ENCODE measurements at regions of chr9 and their contacts with region 1.

Region 1: DNA sequence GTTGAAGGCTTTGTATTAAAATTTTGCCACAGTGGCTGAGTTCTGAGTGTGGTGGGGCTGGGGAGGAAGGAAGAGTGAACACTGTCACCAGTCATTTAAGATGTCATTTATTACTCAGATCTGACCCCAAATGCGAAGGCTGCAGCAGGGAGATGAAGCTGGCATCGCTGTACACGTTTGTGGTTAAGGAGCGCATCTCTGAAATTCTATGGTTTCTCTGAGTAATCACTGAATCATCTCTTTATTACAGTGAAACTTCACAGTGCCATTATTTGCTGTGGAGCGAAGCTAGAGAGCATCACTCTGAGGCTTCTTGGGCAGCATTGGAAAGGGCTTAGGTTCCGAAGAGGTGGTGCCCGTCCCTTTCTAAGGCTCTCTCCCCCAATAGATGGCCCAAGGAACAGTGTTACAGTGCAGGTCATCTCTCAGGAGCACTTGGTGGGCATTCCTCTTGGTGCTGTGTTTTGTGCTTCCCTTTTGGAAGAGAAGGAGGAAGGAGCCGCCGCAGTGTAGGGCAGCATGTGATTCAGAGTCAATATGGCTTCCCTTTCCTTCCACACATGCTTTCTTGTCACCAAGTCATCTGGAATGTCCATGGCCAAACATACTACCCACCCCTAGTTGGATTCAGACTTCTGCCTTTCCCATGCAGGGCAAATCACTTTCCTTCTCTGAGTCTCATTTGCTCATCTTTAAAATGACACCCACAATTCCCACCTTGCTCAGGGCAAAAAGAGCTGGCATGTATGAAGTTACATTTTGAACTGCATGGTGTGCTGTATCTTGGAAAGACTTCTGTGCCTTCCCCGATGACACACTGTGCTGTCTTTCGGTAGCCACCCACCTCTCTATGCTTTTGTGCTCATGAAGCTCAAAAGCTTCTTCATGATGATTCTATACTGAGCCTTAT is 9.3 kb upstream of the TEX48 start:
- DNase-seq: peak in 5 of 9 donors; percentile 4 to 66 (median 6)
- ATAC-seq: peak; percentile 84
- H3K4me3 ChIP-seq: peak overlapping the region; percentile 2
- H3K4me3 Mint-ChIP-seq: peak overlapping the region in 8 of 10 donors; percentile 0 to 66 (median 12)
- H3K27ac ChIP-seq: no peak overlapping the region
- H3K27ac Mint-ChIP-seq: peak overlapping the region in 4 of 9 donors; percentile 64 to 91 (median 80)
- H3K4me1 ChIP-seq: peaks cover 0 to 24% of the 10 kb centered on the region in 2 donors
- H3K4me1 Mint-ChIP-seq: peaks cover 6 to 90% (median 12%) of the 10 kb centered on the region in 7 donors
- H3K27me3 ChIP-seq: no peaks in the 10 kb centered on the region
- H3K27me3 Mint-ChIP-seq: no peaks in the 10 kb centered on the region

Region 2: GRCh38 chr9:114718801-114719221 is 27.5 kb after region 1 on chr9:
- CTCF ChIA-PET with region 1: no interaction called
- POLR2A ChIA-PET with region 1: no interaction called
- intact Hi-C with region 1: loop called in 1 of 2 experiments (anchors 1 kb)
- DNase-seq: peak in 5 of 9 donors; percentile 8 to 91 (median 18)
- ATAC-seq: peak; percentile 76
- H3K4me3 ChIP-seq: no peak overlapping the region
- H3K4me3 Mint-ChIP-seq: peak overlapping the region in 9 of 10 donors; percentile 0 to 75 (median 19)
- H3K27ac ChIP-seq: no peak overlapping the region
- H3K27ac Mint-ChIP-seq: peak overlapping the region in 6 of 9 donors; percentile 12 to 97 (median 64)
- H3K4me1 ChIP-seq: peaks cover 14 to 34% of the 10 kb centered on the region in 2 donors
- H3K4me1 Mint-ChIP-seq: peaks cover 10 to 88% (median 20%) of the 10 kb centered on the region in 7 donors
- H3K27me3 ChIP-seq: no peaks in the 10 kb centered on the region
- H3K27me3 Mint-ChIP-seq: no peaks in the 10 kb centered on the region

Region 3: GRCh38 chr9:114938687-114939575 is 247.6 kb after region 1 on chr9:
- CTCF ChIA-PET with region 1: no interaction called
- POLR2A ChIA-PET with region 1: no interaction called
- intact Hi-C with region 1: no loop called
- DNase-seq: peak in 2 of 9 donors; percentile 19 to 34
- ATAC-seq: no peak
- H3K4me3 ChIP-seq: peak overlapping the region; percentile 6
- H3K4me3 Mint-ChIP-seq: peak overlapping the region; percentile 30 to 63 (median 47)
- H3K27ac ChIP-seq: no peak overlapping the region
- H3K27ac Mint-ChIP-seq: peak overlapping the region; percentile 21 to 71 (median 54)
- H3K4me1 ChIP-seq: peaks cover 11 to 17% of the 10 kb centered on the region in 2 donors
- H3K4me1 Mint-ChIP-seq: peaks cover 19 to 42% (median 30%) of the 10 kb centered on the region in 7 donors
- H3K27me3 ChIP-seq: no peaks in the 10 kb centered on the region
- H3K27me3 Mint-ChIP-seq: no peaks in the 10 kb centered on the region

Region 4: GRCh38 chr9:114953917-114954316 is 262.6 kb after region 1 on chr9:
- CTCF ChIA-PET with region 1: no interaction called
- POLR2A ChIA-PET with region 1: no interaction called
- intact Hi-C with region 1: loop called in 1 of 2 experiments (anchors 1 kb)
- DNase-seq: no peak
- ATAC-seq: peak; percentile 42
- H3K4me3 ChIP-seq: no peak overlapping the region
- H3K4me3 Mint-ChIP-seq: no peak overlapping the region
- H3K27ac ChIP-seq: no peak overlapping the region
- H3K27ac Mint-ChIP-seq: no peak overlapping the region
- H3K4me1 ChIP-seq: peaks cover 5 to 6% of the 10 kb centered on the region in 2 donors
- H3K4me1 Mint-ChIP-seq: peaks cover 14 to 39% (median 21%) of the 10 kb centered on the region in 7 donors
- H3K27me3 ChIP-seq: no peaks in the 10 kb centered on the region
- H3K27me3 Mint-ChIP-seq: peaks cover 0 to 2% (median 0%) of the 10 kb centered on the region in 5 donors